ENCODE measurements at regions of chr19 and their contacts with region 1.

Region 1: GRCh38 chr19:44051654-44052402 is at the start of gene ZNF223:
- DNase-seq: peak; percentile 97
- total RNA-seq, gene ZNF223: 2.2 TPM

Region 2: DNA sequence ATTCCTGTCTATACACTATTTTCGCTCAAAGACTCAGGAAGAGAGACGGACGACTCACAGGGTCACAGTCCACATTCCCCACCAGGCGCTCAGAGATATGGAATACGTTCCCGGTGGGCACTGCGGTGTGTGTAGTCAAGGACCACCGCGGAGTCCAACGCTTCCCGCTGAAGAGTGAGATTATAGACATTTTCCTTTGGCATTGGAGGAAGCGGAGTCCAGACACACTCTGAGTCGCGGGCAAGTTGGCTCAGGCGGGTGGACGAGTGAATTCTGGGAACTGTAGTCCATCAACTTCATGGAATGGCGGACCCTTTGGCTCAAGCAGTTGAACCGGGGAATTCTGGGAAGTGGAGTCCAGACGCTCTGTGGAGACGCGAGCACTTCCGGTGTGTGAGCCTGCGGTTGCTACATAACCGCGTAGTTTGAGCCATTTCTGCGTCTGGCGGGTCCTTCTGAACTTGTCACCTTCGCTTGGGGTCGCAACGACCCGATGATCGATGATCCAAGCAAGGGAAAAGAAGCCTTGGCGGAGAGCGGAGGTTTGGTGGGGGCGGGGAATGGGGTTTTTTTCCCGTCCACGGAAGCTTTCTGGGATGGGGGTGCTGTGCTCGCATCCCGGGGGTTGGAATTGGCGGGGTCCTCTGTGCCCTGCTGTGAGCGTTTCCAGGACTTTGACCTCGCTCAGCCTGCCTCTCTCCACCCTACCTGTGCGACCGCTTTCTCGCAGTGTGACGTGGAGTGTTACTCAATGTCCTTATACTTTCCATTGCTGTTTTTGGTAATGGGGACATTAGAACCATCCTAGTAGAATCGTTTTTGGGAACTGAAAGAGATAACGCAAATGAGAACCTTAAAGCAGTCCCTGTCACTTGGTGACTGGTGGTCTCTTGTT is 49.0 kb before region 1 on chr19 and contains the start of gene ZNF230:
- intact Hi-C with region 1: loop called (anchors 5 kb)
- DNase-seq: peak; percentile 95
- total RNA-seq, gene ZNF230: 2.3 TPM

Region 3: DNA sequence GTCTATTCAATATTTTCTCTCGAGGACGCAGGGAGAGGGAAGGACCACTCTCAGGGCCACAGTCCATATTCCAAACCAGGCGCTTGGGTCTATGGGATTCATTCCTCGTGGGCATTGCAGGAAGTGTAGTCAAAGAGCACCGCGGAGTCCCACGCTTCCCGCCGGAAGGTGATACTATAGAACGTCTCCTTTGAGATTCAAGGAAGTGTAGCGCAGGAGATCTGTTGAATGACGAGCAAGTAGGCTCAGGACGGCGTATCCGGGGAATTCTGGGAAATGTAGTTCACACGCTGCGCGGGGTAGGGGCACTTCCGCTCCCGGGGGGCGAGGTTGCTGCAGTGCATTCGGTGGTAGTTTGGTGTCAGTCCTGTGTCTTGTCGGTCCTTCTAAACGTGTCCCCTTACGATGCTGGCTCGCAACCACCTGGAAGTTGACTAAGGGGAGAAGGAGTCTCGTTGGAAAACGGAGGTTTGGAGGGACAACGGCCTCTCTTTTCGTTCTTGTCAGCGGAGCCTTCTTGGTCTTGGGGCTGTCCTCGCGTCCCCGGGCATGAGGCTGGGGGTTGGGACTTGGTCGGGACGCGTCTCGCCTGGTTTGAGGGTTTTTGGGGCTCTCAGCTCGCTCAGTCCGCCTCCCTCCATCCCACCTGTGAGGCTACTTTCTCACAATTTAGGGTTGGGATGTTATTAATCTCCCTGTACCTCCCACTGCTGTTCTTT is 20.2 kb after region 1 on chr19 and contains the start of gene ZNF284:
- intact Hi-C with region 1: loop called (anchors 2 kb)
- DNase-seq: peak; percentile 94
- total RNA-seq, gene ZNF284: 1.4 TPM

Region 4: DNA sequence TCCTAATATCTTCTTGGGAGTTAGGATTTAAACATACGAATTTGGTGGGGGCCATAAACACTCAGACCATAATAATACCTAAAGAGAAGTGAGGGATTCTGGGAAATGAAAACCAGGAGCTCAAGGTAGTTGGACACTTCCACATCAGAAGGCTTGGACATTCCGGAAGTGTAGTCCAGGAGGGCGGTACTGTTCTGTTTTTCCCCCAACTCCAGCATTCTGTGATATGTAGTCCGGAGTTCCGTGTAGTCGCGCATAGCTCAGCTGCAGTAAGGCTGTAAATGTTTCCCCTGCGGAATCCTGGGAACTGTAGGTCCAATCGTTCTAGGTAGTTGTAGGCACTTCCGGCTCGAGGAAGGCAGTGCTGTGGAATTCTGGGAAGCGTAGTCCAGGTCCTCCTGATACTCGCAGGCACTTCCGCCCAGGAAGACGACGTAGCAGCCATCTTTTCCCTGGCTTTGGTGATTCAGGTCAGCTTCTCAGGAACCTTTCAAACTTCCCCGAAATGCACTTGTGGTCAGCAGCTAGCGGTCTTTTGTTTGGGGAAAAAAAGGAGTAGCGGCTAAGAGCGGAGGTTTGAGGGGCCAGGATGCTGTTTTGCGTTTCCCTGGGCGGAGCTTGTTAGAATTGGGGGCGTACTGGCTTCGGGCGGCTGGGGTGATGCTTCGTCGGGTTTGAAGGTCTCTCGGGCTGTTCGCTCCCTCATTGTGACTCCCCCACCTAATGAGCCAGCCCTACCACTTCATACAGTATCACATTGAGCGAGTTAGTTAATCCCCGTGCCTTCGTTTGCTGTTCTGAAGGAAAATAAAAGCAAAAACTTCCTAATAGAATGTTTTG is 113.1 kb after region 1 on chr19 and contains the start of gene ZNF226:
- intact Hi-C with region 1: loop called (anchors 5 kb)
- DNase-seq: peak; percentile 95
- total RNA-seq, gene ZNF226: 25.6 TPM